ENCODE measurements at regions of chr19 and their contacts with region 1.

Region 1: DNA sequence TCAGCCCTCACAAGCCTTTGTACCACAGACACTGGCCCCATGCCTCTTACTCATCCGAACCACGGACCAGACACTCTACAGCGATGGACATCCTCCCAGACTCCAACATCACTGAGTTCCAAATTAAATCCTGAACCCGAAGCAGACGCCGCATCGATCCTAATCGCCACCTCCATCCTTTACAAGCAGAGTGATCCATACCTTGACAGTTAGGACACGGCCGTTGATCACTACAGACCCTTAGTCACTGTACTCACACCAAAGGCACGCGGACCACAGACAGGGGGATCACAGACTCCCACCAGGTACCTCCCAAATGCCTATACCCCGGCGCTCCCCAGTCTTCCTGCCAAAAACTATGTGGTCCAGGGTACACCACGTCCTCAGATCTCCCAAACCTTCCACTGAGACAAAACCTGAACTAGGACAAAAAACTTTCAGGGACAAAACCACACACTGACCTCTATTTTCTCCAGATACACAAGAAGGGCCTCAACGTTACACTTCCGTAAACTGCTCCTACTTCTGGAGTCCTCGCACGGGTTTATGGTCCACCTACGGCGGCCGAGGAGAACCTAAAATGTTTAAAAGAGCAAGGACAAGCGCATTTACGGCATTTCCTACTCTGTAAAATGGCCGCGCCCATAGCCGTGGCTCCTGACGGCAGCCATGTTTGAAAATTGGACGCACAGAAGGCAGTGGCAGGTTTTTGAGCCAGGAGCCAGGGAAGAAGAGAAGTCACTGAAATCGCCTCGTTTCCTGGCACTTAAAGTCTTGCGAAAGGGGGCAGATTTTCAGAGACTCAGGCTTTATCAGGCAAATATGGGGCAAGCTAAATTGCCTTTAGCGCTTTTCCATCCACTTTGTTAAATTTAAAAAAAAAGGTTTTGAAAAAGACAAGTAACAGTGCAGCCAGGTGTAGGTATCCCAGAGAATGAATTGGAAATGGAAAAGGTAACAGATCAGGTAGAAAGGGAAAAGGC is at the start of gene ZNF350:
- DNase-seq: peak; percentile 78 to 97
- H3K4me3 ChIP-seq: peak within 1 kb of the TSS; percentile 57 to 78
- H3K27ac ChIP-seq: peak within 1 kb of the TSS; percentile 57 to 71
- H3K4me1 ChIP-seq: peaks cover 0 to 5% of the 10 kb centered on the region in 2 donors
- H3K27me3 ChIP-seq: no peaks in the 10 kb centered on the region
- CTCF ChIP-seq: no peak
- total RNA-seq, gene ZNF350: 11.4 TPM

Region 2: DNA sequence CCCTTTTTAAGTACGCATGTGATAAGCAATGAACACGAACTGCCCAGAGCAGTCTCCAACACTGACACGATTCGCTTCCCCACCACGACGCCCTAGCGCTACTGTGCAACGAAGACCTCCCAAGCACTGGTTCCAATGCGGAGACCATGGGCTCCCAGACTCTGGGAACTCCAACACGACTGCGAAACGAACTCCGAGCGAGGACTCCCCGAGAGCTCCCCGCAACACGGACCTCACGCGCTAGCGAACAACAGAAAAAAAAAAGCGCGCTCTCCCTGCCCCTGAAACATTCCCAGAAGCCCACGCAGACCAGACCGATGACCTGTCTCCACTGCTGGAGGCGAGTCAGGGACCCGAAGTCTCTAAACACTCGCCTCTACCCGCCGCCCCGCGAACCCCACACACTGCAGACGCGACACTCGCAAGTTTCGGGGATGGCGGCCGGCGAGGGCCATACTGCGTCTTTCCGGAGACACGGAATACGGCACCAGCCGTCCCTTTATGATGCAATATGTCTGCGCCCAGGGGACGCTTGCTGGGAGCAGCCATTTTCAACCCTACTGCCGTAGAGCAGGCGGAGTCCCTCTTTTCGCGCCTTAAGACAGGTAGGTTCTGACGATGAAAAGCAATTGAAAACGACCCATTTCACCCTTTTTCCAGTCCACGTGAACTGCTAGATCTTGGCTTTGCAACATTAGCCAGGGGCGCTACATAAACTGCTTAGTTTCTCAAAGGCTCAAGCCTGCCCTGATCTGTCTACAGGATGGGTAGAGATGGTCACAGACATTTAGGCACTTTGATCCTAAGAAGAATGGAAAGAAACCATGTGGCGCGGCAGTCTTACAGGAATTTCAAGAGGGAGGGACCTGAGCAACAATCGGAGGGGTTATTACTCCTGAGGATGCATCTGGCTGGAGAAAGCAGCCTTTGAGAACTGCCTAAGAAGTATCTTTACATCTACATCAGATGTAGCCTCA is 98.8 kb before region 1 on chr19 and contains the start of gene ZNF577:
- intact Hi-C with region 1: loop called (anchors 2 kb)
- DNase-seq: peak; percentile 53 to 93
- H3K4me3 ChIP-seq: peak within 1 kb of the TSS; percentile 59 to 85
- H3K27ac ChIP-seq: peak within 1 kb of the TSS; percentile 60 to 74
- H3K4me1 ChIP-seq: no peaks in the 10 kb centered on the region
- H3K27me3 ChIP-seq: no peaks in the 10 kb centered on the region
- CTCF ChIP-seq: no peak
- total RNA-seq, gene ZNF577: 3.8 TPM

Region 3: GRCh38 chr19:51926784-51927742 is 59.5 kb before region 1 on chr19 and contains the start of gene ZNF613:
- intact Hi-C with region 1: loop called (anchors 2 kb)
- DNase-seq: peak; percentile 47 to 91
- H3K4me3 ChIP-seq: peak within 1 kb of the TSS; percentile 81 to 87
- H3K27ac ChIP-seq: peak within 1 kb of the TSS; percentile 70 to 71
- H3K4me1 ChIP-seq: peaks cover 0 to 6% of the 10 kb centered on the region in 2 donors
- H3K27me3 ChIP-seq: no peaks in the 10 kb centered on the region
- CTCF ChIP-seq: peak in 2 of 3 experiments; percentile 29 to 44
- total RNA-seq, gene ZNF613: 4.0 TPM

Region 4: GRCh38 chr19:52028027-52028779 is 41.6 kb after region 1 on chr19 and contains the start of gene ZNF614:
- intact Hi-C with region 1: loop called (anchors 2 kb)
- DNase-seq: peak; percentile 71 to 94
- H3K4me3 ChIP-seq: peak within 1 kb of the TSS; percentile 81 to 96
- H3K27ac ChIP-seq: peak within 1 kb of the TSS; percentile 94 to 98
- H3K4me1 ChIP-seq: peaks cover 0 to 5% of the 10 kb centered on the region in 2 donors
- H3K27me3 ChIP-seq: no peaks in the 10 kb centered on the region
- CTCF ChIP-seq: no peak
- total RNA-seq, gene ZNF614: 1.7 TPM

Region 5: GRCh38 chr19:52048555-52049501 is 62.2 kb after region 1 on chr19 and contains the start of gene ZNF432:
- intact Hi-C with region 1: loop called (anchors 2 kb)
- DNase-seq: peak; percentile 78 to 97
- H3K4me3 ChIP-seq: peak within 1 kb of the TSS; percentile 59 to 69
- H3K27ac ChIP-seq: peak within 1 kb of the TSS; percentile 90 to 95
- H3K4me1 ChIP-seq: no peaks in the 10 kb centered on the region
- H3K27me3 ChIP-seq: no peaks in the 10 kb centered on the region
- CTCF ChIP-seq: no peak
- total RNA-seq, gene ZNF432: 6.1 TPM

Region 6: DNA sequence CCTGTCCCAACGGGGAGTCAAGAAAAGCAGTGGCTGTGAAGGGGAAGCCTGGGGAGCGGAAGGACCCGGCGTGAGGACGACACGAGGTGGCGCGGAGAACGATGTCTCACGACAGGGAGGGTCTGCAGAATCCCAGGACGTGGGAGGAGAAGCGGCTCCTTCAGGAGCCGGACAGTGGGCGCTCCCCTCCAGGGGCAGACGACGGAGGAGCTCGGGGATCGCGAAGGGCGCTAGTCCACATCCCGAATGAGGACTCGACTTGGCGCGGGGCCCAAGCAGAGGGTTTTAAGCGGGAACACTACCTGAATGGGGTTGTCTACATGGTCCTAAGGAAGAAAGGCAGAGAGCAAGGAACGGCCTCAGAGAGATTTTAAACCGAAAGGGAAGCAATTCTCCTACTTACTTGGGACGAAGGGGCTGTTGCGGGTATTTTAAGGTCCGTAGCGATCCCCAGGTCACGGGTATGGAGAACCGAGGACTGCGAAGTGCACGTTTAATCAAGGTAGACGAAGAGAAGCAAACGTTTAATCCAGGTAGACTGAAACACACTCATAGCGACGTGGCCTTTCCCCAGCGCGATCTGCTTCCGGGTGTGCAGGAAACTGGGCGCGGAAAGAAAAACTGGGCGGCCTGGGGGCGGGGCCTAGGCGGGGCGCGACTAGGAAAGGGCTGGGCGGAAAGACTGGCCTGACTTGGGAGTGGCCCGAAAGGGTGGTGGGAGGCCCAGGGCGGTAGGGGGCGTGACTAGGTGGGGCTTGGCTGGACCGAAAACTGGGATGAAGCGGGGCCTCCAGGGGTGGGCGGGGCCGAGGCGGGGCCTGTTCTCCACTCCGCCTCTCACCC is 108.8 kb after region 1 on chr19 and contains the start of gene ZNF841:
- intact Hi-C with region 1: loop called (anchors 5 kb)
- DNase-seq: peak; percentile 85 to 97
- H3K4me3 ChIP-seq: peak within 1 kb of the TSS; percentile 91 to 95
- H3K27ac ChIP-seq: peak within 1 kb of the TSS; percentile 75 to 87
- H3K4me1 ChIP-seq: no peaks in the 10 kb centered on the region
- H3K27me3 ChIP-seq: no peaks in the 10 kb centered on the region
- CTCF ChIP-seq: no peak
- total RNA-seq, gene ZNF841: 6.9 TPM